Endothelial cell of umbilical vein (primary cell): ENCODE measurements at regions of chr13 and their contacts with region 1.

Region 1: GRCh38 chr13:98653463-98653985 is 76.6 kb upstream of the STK24 start:
- DNase-seq: peak; percentile 78
- H3K4me3 ChIP-seq: no peak overlapping the region
- H3K27ac ChIP-seq: no peak overlapping the region
- H3K4me1 ChIP-seq: no peaks in the 10 kb centered on the region
- H3K27me3 ChIP-seq: peaks cover 0 to 5% of the 10 kb centered on the region in 2 experiments
- CTCF ChIP-seq: peak; percentile 79 to 86
- POLR2A ChIP-seq: no peak

Region 2: DNA sequence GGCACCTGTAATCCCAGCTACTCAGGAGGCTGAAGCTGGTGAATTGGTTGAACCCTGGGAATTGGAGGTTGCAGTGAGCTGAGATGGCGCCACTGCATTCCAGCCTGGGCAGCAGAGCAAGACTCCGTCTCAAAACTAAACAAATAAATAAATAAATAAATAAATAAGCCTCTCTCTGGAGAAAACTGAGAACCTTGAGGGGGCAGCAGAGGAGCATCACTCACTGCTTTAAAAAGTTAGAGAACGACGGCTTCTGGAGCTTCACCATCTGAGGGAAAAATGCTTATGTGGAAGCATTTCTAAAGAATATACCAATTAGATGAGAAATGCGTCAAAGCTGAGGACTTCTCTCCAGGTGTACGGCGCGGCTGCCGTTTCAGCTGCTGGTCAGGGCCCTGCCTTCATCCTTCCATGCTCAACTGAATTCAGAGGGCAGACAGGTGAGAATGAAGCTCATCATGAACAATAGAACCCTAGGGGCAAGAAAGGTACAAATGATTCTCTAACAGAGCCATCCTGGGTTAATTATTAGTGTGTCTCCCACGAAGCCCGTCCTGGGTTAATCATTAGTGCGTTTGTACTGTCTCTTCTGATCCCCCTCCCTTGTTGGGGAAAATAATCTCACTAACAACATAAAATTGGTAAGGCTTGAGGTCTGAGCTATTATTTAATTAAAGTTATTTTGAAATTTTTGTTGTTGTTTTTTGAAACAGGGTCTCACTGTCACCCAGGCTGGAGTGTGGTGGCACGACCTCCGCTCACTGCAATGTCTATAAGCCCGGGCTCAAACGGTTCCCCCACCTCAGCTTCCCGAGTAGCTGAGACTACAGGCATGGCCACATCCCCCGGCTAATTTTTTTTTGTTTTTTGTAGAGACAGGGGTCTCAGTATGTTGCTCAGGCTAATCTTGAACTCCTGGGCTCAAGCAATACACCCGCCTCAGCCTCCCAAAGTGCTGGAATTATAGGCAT is 620.0 kb before region 1 on chr13:
- CTCF ChIA-PET with region 1: interaction called, 27 read pairs
- POLR2A ChIA-PET with region 1: no interaction called
- dilution Hi-C with region 1: no loop called
- intact Hi-C with region 1: no loop called
- DNase-seq: peak; percentile 45
- H3K4me3 ChIP-seq: no peak overlapping the region
- H3K27ac ChIP-seq: no peak overlapping the region
- H3K4me1 ChIP-seq: no peaks in the 10 kb centered on the region
- H3K27me3 ChIP-seq: no peaks in the 10 kb centered on the region
- CTCF ChIP-seq: peak; percentile 14 to 35
- POLR2A ChIP-seq: no peak

Region 3: GRCh38 chr13:98239162-98240076 is 414.1 kb before region 1 on chr13:
- CTCF ChIA-PET with region 1: no interaction called
- POLR2A ChIA-PET with region 1: no interaction called
- dilution Hi-C with region 1: no loop called
- intact Hi-C with region 1: no loop called
- DNase-seq: no peak
- H3K4me3 ChIP-seq: no peak overlapping the region
- H3K27ac ChIP-seq: no peak overlapping the region
- H3K4me1 ChIP-seq: no peaks in the 10 kb centered on the region
- H3K27me3 ChIP-seq: no peaks in the 10 kb centered on the region
- CTCF ChIP-seq: no peak
- POLR2A ChIP-seq: no peak

Region 4: GRCh38 chr13:98454389-98454881 is 199.1 kb before region 1 on chr13:
- CTCF ChIA-PET with region 1: interaction called, 19 read pairs
- POLR2A ChIA-PET with region 1: no interaction called
- dilution Hi-C with region 1: loop called (anchors 25 kb)
- intact Hi-C with region 1: no loop called
- DNase-seq: peak; percentile 44
- H3K4me3 ChIP-seq: no peak overlapping the region
- H3K27ac ChIP-seq: no peak overlapping the region
- H3K4me1 ChIP-seq: no peaks in the 10 kb centered on the region
- H3K27me3 ChIP-seq: no peaks in the 10 kb centered on the region
- CTCF ChIP-seq: no peak
- POLR2A ChIP-seq: no peak

Region 5: DNA sequence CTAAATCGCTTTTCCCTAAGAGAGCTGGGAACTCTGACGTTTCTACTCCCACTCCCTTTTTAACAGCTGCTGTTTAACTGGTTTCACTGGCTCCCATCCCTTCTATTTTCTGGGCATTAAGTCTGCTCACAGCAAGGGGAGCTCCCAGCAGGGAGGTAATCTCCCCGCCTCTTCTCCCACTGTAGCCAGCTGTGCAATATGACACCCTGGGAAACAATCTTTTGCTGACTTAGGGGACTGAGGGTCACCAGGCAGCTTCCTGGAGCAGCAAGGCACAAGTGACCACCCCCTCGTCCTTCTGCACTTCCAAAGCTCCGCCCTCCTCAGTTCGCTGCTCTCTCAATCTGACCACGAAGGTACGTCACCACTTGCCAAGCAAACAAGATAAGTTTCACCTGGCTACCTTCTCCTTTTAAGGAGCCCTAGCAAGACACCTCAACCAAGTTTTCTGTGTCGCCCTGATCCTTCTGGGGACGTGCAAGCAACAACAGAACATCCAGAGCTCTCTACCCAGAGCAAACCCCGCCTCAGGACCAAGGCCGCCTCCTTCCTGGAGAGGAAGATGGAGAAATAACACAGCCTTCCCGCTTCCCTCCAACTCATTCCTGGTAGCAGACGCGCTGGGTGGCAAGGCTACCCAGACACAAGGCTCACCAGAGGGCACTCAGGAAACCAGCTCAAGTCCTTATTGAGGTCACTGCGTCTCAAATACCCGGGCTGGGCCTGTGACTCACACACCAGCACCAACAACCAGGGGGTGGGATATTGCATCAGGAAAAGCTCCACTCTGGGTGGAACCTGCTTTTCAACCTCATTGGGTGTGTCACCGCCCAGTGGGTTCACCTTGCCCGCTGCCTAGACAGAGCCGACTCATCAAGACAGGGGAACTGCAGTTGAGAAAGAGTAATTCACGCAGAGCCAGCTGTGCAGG is 169.0 kb before region 1 on chr13:
- CTCF ChIA-PET with region 1: interaction called, 32 read pairs
- POLR2A ChIA-PET with region 1: no interaction called
- dilution Hi-C with region 1: no loop called
- intact Hi-C with region 1: no loop called
- DNase-seq: peak; percentile 96
- H3K4me3 ChIP-seq: peak overlapping the region in 1 of 3 experiments; percentile 25
- H3K27ac ChIP-seq: peak overlapping the region; percentile 99
- H3K4me1 ChIP-seq: peaks cover 45% of the 10 kb centered on the region
- H3K27me3 ChIP-seq: no peaks in the 10 kb centered on the region
- CTCF ChIP-seq: no peak
- POLR2A ChIP-seq: peak; percentile 28

Region 6: DNA sequence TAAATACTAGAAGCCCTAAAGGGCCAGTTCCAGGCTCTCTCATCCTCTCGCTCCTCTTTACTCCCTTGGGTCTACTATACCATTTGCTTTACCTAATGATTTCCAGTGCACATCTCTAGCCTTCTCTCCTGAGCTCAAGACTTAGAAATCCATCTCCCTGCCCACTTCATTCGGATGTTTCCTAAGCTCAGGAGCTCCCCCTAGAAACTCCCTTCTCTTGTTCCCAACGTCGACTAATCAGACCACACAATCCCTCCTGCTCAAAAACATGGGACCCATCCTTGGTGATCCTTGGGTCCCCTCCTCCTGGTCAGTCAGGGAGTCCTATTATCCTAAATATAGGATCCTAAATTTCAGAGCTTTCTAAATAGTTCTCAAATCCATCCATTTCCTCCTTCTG is 55.5 kb before region 1 on chr13:
- CTCF ChIA-PET with region 1: interaction called, 19 read pairs
- POLR2A ChIA-PET with region 1: no interaction called
- dilution Hi-C with region 1: no loop called
- intact Hi-C with region 1: no loop called
- DNase-seq: peak; percentile 31
- H3K4me3 ChIP-seq: no peak overlapping the region
- H3K27ac ChIP-seq: no peak overlapping the region
- H3K4me1 ChIP-seq: no peaks in the 10 kb centered on the region
- H3K27me3 ChIP-seq: peaks cover 9 to 14% of the 10 kb centered on the region in 2 experiments
- CTCF ChIP-seq: peak in 1 of 2 donors; percentile 36
- POLR2A ChIP-seq: no peak

Region 7: GRCh38 chr13:98741741-98742435 is 88.4 kb after region 1 on chr13:
- CTCF ChIA-PET with region 1: no interaction called
- POLR2A ChIA-PET with region 1: no interaction called
- dilution Hi-C with region 1: no loop called
- intact Hi-C with region 1: no loop called
- DNase-seq: no peak
- H3K4me3 ChIP-seq: no peak overlapping the region
- H3K27ac ChIP-seq: no peak overlapping the region
- H3K4me1 ChIP-seq: no peaks in the 10 kb centered on the region
- H3K27me3 ChIP-seq: peaks cover 0 to 5% of the 10 kb centered on the region in 2 experiments
- CTCF ChIP-seq: no peak
- POLR2A ChIP-seq: no peak